Heart right ventricle (tissue), 16 donors: ENCODE measurements at regions of chr18 and their contacts with region 1.

Region 1: GRCh38 chr18:52353589-52353988 is 13.6 kb downstream of the DCC start:
- DNase-seq: no peak
- ATAC-seq: peak in 1 of 8 donors; percentile 50
- H3K4me3 ChIP-seq: no peak overlapping the region
- H3K27ac ChIP-seq: no peak overlapping the region
- H3K4me1 ChIP-seq: peaks cover 0 to 7% (median 0%) of the 10 kb centered on the region in 9 donors
- H3K27me3 ChIP-seq: no peaks in the 10 kb centered on the region
- CTCF ChIP-seq: no peak

Region 2: GRCh38 chr18:51941999-51942398 is 411.6 kb before region 1 on chr18:
- intact Hi-C with region 1: no loop called
- DNase-seq: no peak
- ATAC-seq: no peak
- H3K4me3 ChIP-seq: no peak overlapping the region
- H3K27ac ChIP-seq: no peak overlapping the region
- H3K4me1 ChIP-seq: no peaks in the 10 kb centered on the region
- H3K27me3 ChIP-seq: no peaks in the 10 kb centered on the region
- CTCF ChIP-seq: no peak

Region 3: GRCh38 chr18:53521068-53521467 is 1167.5 kb after region 1 on chr18:
- intact Hi-C with region 1: loop called in 1 of 10 experiments (anchors 5 kb)
- DNase-seq: no peak
- ATAC-seq: no peak
- H3K4me3 ChIP-seq: no peak overlapping the region
- H3K27ac ChIP-seq: no peak overlapping the region
- H3K4me1 ChIP-seq: no peaks in the 10 kb centered on the region
- H3K27me3 ChIP-seq: no peaks in the 10 kb centered on the region
- CTCF ChIP-seq: no peak